ENCODE measurements at regions of chr22 and their contacts with region 1.

Region 1: DNA sequence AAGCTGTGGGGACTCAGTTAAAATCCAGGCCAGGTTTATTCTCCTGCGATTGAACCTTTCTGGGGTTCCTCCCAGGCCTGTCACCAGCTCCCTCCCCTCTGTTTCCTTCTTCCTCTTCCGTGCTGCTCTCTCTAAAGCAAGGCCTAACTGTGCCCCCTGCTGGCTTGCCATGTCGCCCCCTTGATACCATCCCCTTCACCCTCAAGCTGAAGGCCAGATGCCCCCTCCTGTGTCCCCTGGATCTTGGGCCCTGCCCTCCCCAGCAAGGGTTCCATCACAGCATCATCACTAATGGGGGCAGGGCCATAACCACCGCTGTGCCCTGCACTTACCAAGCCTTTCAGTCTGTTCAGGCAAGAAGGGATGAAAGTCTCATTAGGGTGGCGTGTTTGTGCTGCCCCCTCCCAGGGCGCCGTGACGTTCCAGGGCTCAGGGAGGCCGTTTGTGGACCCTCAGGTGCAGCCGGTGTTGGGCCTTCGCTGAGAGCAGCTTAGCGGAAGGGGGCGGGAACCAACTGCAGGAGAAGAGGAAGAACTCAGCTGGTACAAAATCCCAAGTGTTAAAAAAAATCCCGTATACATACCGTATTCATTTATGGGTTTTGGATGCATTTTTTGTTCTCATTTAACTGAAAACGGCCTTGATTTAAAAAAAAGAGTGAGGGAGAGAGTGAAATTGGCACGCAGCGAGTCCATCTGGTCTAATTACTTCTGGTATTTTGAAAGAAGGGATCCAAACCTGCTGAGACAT is 69.9 kb downstream of the MPPED1 start:
- DNase-seq: peak; percentile 61
- ATAC-seq: peak; percentile 88
- H3K4me3 Mint-ChIP-seq: peak overlapping the region; percentile 57
- H3K27ac Mint-ChIP-seq: peak overlapping the region; percentile 79
- H3K4me1 Mint-ChIP-seq: peaks cover 14% of the 10 kb centered on the region
- H3K27me3 Mint-ChIP-seq: no peaks in the 10 kb centered on the region
- CTCF ChIP-seq: peak; percentile 41

Region 2: DNA sequence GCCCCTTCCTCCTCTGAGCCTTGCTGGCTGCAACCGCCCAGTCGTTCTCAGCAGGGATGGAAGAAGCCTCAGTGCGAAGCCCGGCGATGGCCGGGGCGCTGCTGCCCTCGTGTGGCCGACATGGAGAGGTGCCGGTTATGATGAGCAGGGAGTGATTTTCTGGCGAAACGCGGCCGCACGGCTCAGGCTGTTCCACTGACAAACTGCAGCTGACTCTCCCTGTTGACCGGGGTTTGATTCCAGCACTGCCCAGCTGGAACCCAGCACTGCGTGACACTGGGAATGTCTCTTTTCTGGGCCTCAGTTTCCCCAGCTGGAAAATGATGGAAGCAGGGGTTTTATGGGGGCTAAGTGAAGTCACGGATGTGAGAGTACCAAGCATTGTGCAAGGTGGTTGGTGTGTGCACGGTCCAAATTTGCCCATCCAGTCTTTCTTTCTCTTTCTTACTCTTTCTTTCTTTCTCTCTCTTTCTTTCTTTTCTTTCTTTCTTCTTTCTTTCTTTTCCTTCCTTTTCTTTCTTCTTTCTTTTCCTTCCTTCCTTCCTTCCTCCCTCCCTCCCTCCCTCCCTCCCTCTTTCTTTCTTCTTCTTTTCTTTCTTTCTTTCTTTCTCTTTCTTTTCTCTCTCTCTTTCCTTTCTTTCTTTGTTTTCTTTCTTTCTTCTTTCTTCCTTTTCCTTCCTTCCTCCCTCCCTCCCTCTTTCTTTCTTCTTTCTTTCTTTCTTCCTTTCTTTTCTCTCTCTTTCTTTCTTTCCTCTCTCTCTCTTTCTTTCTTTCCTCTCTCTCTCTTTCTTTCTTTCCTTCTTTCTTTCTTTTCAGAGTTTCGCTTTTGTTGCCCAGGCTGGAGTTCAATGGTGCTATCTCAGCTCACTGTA is 95.7 kb before region 1 on chr22:
- CTCF ChIA-PET with region 1: interaction called, 16 read pairs
- POLR2A ChIA-PET with region 1: no interaction called
- intact Hi-C with region 1: no loop called
- DNase-seq: peak; percentile 78
- ATAC-seq: peak; percentile 89
- H3K4me3 Mint-ChIP-seq: no peak overlapping the region
- H3K27ac Mint-ChIP-seq: no peak overlapping the region
- H3K4me1 Mint-ChIP-seq: peaks cover 5% of the 10 kb centered on the region
- H3K27me3 Mint-ChIP-seq: peaks cover 23% of the 10 kb centered on the region
- CTCF ChIP-seq: peak; percentile 65

Region 3: GRCh38 chr22:43587565-43587964 is 105.8 kb after region 1 on chr22:
- CTCF ChIA-PET with region 1: no interaction called
- POLR2A ChIA-PET with region 1: no interaction called
- intact Hi-C with region 1: no loop called
- DNase-seq: no peak
- ATAC-seq: no peak
- H3K4me3 Mint-ChIP-seq: no peak overlapping the region
- H3K27ac Mint-ChIP-seq: no peak overlapping the region
- H3K4me1 Mint-ChIP-seq: no peaks in the 10 kb centered on the region
- H3K27me3 Mint-ChIP-seq: peaks cover 1% of the 10 kb centered on the region
- CTCF ChIP-seq: no peak

Region 4: GRCh38 chr22:43666457-43666856 is 184.7 kb after region 1 on chr22:
- CTCF ChIA-PET with region 1: no interaction called
- POLR2A ChIA-PET with region 1: no interaction called
- intact Hi-C with region 1: no loop called
- DNase-seq: no peak
- ATAC-seq: no peak
- H3K4me3 Mint-ChIP-seq: no peak overlapping the region
- H3K27ac Mint-ChIP-seq: no peak overlapping the region
- H3K4me1 Mint-ChIP-seq: no peaks in the 10 kb centered on the region
- H3K27me3 Mint-ChIP-seq: no peaks in the 10 kb centered on the region
- CTCF ChIP-seq: no peak

Region 5: DNA sequence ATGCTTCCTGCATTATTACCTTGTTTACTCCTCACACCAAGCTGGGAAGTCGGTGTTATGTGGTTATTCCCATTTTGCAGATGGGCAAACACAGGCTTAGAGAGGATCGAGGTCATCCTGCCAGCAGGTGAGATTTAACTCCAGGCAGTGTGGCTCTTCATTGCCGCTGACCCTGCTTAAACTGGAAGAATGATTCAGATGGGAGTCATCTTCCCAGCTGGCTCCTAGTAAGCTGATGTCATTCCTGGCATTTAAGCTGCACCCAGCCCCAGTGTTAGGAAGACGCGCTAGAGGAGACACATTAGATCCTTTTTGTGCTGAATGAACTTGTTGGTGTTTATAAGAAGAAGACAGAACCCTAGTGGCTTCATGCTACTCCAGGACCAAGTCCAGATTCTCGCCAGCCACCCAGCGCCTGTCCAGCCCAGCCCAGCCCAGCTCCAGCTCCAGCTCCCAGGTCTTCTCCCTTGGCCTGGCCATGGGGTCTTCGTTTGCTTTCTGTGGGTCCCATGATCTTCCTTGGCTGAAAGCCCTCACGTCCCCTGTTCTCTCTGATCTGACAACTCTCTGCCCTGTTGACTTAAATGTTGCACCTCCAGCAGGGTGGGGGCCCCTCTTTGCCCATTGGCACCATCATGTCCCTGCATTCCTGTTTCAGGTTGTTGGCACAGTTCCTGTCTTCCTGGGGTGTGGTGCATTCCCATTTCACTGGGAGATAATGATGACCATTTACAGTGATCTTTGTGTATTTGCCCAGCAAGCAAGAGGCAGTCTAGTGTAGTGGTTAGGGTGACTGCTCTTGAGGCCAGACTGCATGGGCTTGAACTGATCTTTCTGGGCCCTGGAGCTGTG is 556.0 kb after region 1 on chr22:
- CTCF ChIA-PET with region 1: no interaction called
- POLR2A ChIA-PET with region 1: no interaction called
- intact Hi-C with region 1: no loop called
- DNase-seq: no peak
- ATAC-seq: no peak
- H3K4me3 Mint-ChIP-seq: no peak overlapping the region
- H3K27ac Mint-ChIP-seq: no peak overlapping the region
- H3K4me1 Mint-ChIP-seq: peaks cover 4% of the 10 kb centered on the region
- H3K27me3 Mint-ChIP-seq: peaks cover 7% of the 10 kb centered on the region
- CTCF ChIP-seq: no peak